PC-3 (cell line): ENCODE measurements at regions of chr7 and their contacts with region 1.

Region 1: GRCh38 chr7:31373337-31374289 is 33.1 kb upstream of the NEUROD6 start:
- DNase-seq: peak; percentile 76
- ATAC-seq: peak; percentile 94
- H3K4me3 ChIP-seq: no peak overlapping the region
- H3K27ac ChIP-seq: no peak overlapping the region
- H3K4me1 ChIP-seq: no peaks in the 10 kb centered on the region
- H3K27me3 ChIP-seq: peaks cover 46% of the 10 kb centered on the region
- CTCF ChIP-seq: peak; percentile 86

Region 2: GRCh38 chr7:31134246-31135188 is 239.1 kb before region 1 on chr7:
- CTCF ChIA-PET with region 1: no interaction called
- POLR2A ChIA-PET with region 1: no interaction called
- intact Hi-C with region 1: loop called (anchors 5 kb)
- DNase-seq: peak; percentile 86
- ATAC-seq: peak; percentile 99
- H3K4me3 ChIP-seq: no peak overlapping the region
- H3K27ac ChIP-seq: no peak overlapping the region
- H3K4me1 ChIP-seq: no peaks in the 10 kb centered on the region
- H3K27me3 ChIP-seq: peaks cover 30% of the 10 kb centered on the region
- CTCF ChIP-seq: peak; percentile 76

Region 3: GRCh38 chr7:31443457-31443856 is 69.8 kb after region 1 on chr7:
- CTCF ChIA-PET with region 1: interaction called, 21 read pairs
- POLR2A ChIA-PET with region 1: no interaction called
- intact Hi-C with region 1: loop called (anchors 1 kb)
- DNase-seq: peak; percentile 79
- ATAC-seq: peak; percentile 77
- H3K4me3 ChIP-seq: no peak overlapping the region
- H3K27ac ChIP-seq: no peak overlapping the region
- H3K4me1 ChIP-seq: no peaks in the 10 kb centered on the region
- H3K27me3 ChIP-seq: peaks cover 55% of the 10 kb centered on the region
- CTCF ChIP-seq: peak; percentile 81

Region 4: DNA sequence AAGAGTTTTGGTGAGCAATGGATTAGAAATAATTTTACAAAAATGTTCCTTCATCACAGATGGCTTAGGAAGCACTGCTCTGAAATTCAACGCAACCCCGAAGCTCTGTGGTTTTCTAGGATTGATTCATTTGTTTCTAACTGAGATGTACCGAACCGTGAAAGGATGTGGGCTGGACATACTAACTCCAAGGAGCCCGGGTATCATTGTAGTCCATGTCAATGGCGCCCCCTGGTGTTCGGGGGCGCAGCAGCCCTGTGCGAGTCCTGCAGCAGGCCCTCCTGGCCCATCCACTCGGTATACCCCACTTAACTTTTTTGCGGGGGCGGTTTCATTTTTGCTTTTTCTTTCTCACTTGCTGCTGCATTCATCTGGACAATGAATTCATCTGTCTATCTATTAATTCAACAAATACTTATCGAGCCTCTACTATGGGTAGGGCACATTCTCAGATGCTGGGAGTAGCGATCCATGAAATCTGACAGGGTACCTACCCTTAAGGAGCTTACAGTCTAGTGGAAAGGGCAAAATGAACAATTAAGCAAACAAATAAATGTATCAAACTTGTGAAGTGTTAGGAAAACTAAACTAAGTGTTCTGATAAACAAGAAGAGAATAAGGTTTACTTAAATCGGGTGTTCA is 115.1 kb after region 1 on chr7:
- CTCF ChIA-PET with region 1: interaction called, 3 read pairs
- POLR2A ChIA-PET with region 1: no interaction called
- intact Hi-C with region 1: loop called (anchors 1 kb)
- DNase-seq: peak; percentile 87
- ATAC-seq: peak; percentile 100
- H3K4me3 ChIP-seq: no peak overlapping the region
- H3K27ac ChIP-seq: no peak overlapping the region
- H3K4me1 ChIP-seq: peaks cover 9% of the 10 kb centered on the region; the same call in 1 of the 2 replicates
- H3K27me3 ChIP-seq: no peaks in the 10 kb centered on the region
- CTCF ChIP-seq: peak; percentile 92

Region 5: GRCh38 chr7:31735991-31736982 is 362.7 kb after region 1 on chr7:
- CTCF ChIA-PET with region 1: no interaction called
- POLR2A ChIA-PET with region 1: no interaction called
- intact Hi-C with region 1: loop called (anchors 1 kb)
- DNase-seq: peak; percentile 79
- ATAC-seq: peak; percentile 95
- H3K4me3 ChIP-seq: no peak overlapping the region
- H3K27ac ChIP-seq: no peak overlapping the region
- H3K4me1 ChIP-seq: no peaks in the 10 kb centered on the region
- H3K27me3 ChIP-seq: no peaks in the 10 kb centered on the region
- CTCF ChIP-seq: peak; percentile 84